ENCODE measurements at regions of chr2 and their contacts with region 1.

Region 1: DNA sequence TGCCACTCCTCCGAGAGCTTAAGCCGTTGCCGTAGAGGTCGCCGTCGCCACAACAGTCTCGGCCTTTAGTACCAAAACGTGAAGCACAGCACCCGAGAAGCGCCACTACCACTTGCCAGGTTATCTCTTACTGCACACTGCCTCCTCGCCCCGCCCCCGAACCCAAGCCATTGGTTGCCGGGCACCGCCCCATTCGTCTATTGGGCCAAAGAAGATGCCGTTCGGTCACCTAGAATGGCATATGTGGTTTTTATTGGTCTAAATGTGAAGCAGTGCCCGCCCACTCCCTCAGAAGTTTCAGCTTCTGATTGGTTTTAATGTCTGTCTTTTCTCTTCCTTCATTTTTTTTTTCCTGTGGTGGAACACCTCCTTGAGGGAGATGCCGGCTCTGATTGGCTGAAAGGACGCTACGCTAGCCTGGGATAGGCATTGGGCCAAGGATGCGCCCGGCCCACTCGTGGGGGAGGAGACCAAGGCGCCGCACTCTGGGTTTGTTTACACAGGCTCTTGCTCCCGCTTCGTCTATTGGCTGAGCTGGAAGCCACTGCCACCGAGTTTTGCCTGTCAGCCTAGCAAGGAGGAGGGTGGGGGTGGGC is at the start of gene PAIP2B:
- DNase-seq: peak; percentile 100
- H3K4me3 ChIP-seq: peak within 1 kb of the TSS; percentile 77 to 97
- H3K27ac ChIP-seq: peak within 1 kb of the TSS; percentile 87 to 90
- H3K4me1 ChIP-seq: peaks cover 3 to 12% (median 8%) of the 10 kb centered on the region in 4 donors
- H3K27me3 ChIP-seq: no peaks in the 10 kb centered on the region
- CTCF ChIP-seq: peak in 1 of 2 experiments; percentile 6

Region 2: DNA sequence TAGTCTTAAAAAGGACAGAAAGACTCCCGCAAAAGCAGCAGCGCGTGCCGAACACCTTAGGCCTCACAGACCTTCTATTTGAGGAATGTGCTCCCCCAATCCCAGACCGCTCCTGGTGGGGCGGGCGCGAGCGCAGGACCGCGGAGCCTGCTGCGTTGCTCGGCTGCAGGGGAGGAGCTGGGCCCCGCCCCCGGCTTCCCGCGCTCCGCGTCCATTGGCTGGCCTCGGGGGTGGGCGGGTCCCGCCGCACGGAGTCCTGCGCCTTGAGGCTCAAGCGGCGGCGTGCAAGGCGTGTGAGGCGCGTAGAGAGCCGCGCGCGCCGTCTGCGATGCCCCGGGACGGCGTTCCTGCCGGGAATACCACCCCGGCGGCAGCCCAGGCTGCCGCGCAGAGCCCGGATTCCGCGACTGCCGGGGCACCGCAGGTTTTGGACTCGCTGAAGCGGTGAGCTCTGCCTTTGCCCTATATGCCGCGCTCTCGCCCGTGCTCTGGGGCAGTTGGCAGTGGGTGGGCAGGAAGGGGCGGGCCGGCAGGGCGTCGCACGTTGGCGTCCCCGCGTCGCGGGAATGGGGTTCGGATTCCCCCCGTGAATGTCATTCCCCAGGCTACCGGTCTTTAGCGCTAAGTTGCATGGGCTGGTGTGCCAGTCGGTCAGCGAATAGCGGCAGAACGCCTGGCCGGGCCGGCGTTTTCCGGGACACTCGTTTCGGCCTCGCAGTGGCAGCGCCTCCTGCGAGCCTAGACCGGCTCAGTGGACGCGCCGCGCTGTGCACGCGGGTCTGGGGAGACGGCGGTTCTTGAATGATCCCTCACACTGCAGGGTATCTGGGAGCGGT is 49.5 kb after region 1 on chr2:
- intact Hi-C with region 1: loop called (anchors 2 kb)
- DNase-seq: peak; percentile 82 to 92
- H3K4me3 ChIP-seq: peak overlapping the region; percentile 59 to 72
- H3K27ac ChIP-seq: peak overlapping the region; percentile 69 to 78
- H3K4me1 ChIP-seq: peaks cover 0 to 19% (median 11%) of the 10 kb centered on the region in 4 donors
- H3K27me3 ChIP-seq: peaks cover 0 to 3% of the 10 kb centered on the region in 2 donors
- CTCF ChIP-seq: peak in 1 of 2 experiments; percentile 15

Measured in tibial artery (tissue), 4 donors.